Cardiac septum (tissue), 1 donor: ENCODE measurements at regions of chr6 and their contacts with region 1.

Region 1: GRCh38 chr6:122184401-122184827 is 215.0 kb upstream of the HSF2 start:
- DNase-seq: no peak

Region 2: GRCh38 chr6:121771937-121772720 is 412.3 kb before region 1 on chr6:
- intact Hi-C with region 1: no loop called
- DNase-seq: no peak

Region 3: DNA sequence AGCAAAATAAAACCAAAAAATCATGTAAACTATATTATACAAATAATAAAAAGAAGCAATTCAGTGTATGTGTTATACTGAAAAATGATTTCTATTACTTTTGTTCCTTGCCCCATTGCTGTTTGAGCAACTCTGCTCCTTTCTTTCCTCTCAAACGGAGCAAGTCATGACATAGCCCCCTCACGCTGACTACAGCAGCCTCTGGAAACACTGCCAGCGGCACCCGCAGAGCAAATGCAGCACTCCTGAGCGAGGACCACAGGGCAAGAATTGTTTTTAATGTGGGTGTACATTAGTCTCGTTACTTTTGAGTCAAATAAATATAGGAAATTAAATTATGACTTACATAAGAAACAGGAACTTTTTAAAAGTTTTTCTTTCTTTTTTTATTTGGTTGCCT is 135.1 kb before region 1 on chr6:
- intact Hi-C with region 1: loop called (anchors 10 kb)
- DNase-seq: no peak

Region 4: GRCh38 chr6:122092366-122092765 is 92.0 kb before region 1 on chr6:
- intact Hi-C with region 1: no loop called
- DNase-seq: no peak

Region 5: DNA sequence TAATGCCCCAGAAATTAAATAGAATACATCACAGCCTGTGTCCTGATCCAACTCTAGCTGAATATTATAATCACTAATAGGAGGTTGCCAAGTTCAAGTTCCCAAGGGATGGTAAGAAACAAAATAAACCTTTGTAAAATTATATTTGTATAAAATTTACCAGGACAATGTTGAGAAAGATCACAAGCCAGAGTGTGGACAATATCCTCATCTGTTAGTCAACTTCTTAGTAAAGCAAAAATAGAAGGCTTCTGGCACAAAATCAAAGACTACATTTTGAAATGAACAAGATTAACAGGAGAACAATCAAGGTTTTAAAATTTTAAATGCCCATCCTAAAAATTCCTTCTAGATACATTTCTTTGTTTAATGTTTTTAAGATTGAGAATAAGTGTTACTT is 75.3 kb before region 1 on chr6:
- intact Hi-C with region 1: no loop called
- DNase-seq: no peak